Activated T-helper 1 cell treated with anti-CD3 and anti-CD28 coated beads, Interleukin-12 subunit alpha, Interleukin-12 subunit beta, Interleukin-2, Interleukin-4 antibody, amounts not matched to agents 30 ng/mL and 10 ng/mL and 1 ng/mL, durations not matched to agents 14 hours and 24 hours and 36 hours (primary cell): ENCODE measurements at regions of chr6 and their contacts with region 1.

Region 1: GRCh38 chr6:31739639-31740396 is at the start of gene MSH5:
- DNase-seq: peak; percentile 97
- H3K4me3 Mint-ChIP-seq: peak within 1 kb of the TSS; percentile 98
- H3K27ac Mint-ChIP-seq: peak within 1 kb of the TSS; percentile 99
- H3K4me1 Mint-ChIP-seq: peaks cover 64% of the 10 kb centered on the region
- H3K27me3 Mint-ChIP-seq: peaks cover 3% of the 10 kb centered on the region
- total RNA-seq, gene MSH5: 80.5 and 83.4 TPM in 2 replicates

Region 2: DNA sequence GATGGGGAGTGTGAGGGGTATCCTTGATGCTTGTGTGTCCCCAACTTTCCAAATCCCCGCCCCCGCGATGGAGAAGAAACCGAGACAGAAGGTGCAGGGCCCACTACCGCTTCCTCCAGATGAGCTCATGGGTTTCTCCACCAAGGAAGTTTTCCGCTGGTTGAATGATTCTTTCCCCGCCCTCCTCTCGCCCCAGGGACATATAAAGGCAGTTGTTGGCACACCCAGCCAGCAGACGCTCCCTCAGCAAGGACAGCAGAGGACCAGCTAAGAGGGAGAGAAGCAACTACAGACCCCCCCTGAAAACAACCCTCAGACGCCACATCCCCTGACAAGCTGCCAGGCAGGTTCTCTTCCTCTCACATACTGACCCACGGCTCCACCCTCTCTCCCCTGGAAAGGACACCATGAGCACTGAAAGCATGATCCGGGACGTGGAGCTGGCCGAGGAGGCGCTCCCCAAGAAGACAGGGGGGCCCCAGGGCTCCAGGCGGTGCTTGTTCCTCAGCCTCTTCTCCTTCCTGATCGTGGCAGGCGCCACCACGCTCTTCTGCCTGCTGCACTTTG is 164.4 kb before region 1 on chr6 and contains the start of gene TNF:
- intact Hi-C with region 1: loop called (anchors 5 kb)
- DNase-seq: peak; percentile 85
- H3K4me3 Mint-ChIP-seq: peak within 1 kb of the TSS; percentile 92
- H3K27ac Mint-ChIP-seq: peak within 1 kb of the TSS; percentile 81
- H3K4me1 Mint-ChIP-seq: peaks cover 81% of the 10 kb centered on the region
- H3K27me3 Mint-ChIP-seq: peaks cover 2% of the 10 kb centered on the region
- total RNA-seq, gene TNF: 427 and 430 TPM in 2 replicates

Region 3: DNA sequence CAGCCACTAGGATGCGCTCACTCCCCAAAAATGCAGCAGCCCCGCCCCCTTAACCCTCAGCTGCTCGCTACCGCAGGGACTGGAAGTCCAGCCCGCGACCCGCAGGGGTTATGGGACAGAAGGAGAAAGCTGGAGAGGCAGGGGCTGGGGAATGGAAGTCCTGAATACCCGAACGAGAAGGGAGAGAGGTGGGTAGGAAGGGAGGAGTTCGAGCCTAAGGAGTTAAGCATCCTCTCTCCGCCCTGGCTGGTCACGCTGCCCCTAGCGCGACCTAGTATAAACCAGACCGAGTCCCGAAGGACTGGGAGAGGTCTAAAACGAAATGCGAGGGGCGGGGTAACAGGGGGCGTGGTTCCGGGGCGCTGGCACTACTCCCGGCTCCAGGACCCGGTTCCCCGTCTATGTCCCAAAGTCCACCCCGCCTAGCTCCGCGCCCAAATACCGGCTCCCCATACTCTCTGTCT is 10.3 kb before region 1 on chr6:
- intact Hi-C with region 1: loop called (anchors 1 kb)
- DNase-seq: peak; percentile 68
- H3K4me3 Mint-ChIP-seq: peak overlapping the region; percentile 95
- H3K27ac Mint-ChIP-seq: peak overlapping the region; percentile 74
- H3K4me1 Mint-ChIP-seq: peaks cover 54% of the 10 kb centered on the region
- H3K27me3 Mint-ChIP-seq: no peaks in the 10 kb centered on the region

Region 4: DNA sequence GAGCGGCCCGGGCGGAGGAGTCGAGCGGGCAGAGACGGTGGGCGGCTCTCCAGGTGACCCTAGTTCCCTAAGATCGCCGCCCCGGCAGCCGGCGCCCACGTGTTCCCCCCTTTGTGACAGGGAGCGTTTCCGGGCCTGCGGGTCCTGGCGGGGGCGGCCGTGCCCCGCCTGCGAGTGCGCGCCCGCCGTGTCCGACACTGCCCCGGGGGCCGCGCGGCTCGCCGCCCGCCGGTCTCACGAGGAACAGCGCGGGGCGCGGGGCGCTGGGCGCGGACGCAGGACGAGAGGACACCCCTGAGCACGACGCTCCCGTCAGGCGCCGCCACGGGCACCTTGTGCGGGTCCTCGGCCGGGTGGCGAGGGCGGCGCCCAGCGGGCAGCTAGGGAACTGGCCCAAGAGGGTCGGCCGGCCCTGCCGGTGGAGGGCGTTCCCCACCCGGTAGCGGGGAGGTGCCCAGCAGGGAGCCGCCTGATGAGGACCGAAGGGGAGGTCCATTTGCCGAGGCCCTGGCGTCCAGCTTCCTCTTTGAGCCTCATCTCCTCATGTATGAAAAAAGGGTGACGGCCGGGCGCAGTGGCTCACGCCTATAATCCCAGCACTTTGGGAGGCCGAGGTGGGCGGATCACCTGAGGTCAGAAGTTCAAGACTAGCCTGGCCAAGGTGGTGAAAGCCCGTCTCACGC is 55.9 kb after region 1 on chr6 and contains the start of gene VARS1:
- intact Hi-C with region 1: loop called (anchors 1 kb)
- DNase-seq: peak; percentile 84
- H3K4me3 Mint-ChIP-seq: peak within 1 kb of the TSS; percentile 86
- H3K27ac Mint-ChIP-seq: peak within 1 kb of the TSS; percentile 96
- H3K4me1 Mint-ChIP-seq: peaks cover 36% of the 10 kb centered on the region
- H3K27me3 Mint-ChIP-seq: no peaks in the 10 kb centered on the region
- total RNA-seq, gene VARS1: 150 and 161 TPM in 2 replicates

Region 5: GRCh38 chr6:31827286-31828079 is 87.7 kb after region 1 on chr6 and contains the start of gene HSPA1B:
- intact Hi-C with region 1: loop called (anchors 2 kb)
- DNase-seq: peak; percentile 95
- H3K4me3 Mint-ChIP-seq: peak within 1 kb of the TSS; percentile 83
- H3K27ac Mint-ChIP-seq: peak within 1 kb of the TSS; percentile 93
- H3K4me1 Mint-ChIP-seq: peaks cover 41% of the 10 kb centered on the region
- H3K27me3 Mint-ChIP-seq: no peaks in the 10 kb centered on the region
- total RNA-seq, gene HSPA1B: 152 and 155 TPM in 2 replicates